Sigmoid colon (tissue), 7 donors: ENCODE measurements at regions of chr1 and their contacts with region 1.

Region 1: DNA sequence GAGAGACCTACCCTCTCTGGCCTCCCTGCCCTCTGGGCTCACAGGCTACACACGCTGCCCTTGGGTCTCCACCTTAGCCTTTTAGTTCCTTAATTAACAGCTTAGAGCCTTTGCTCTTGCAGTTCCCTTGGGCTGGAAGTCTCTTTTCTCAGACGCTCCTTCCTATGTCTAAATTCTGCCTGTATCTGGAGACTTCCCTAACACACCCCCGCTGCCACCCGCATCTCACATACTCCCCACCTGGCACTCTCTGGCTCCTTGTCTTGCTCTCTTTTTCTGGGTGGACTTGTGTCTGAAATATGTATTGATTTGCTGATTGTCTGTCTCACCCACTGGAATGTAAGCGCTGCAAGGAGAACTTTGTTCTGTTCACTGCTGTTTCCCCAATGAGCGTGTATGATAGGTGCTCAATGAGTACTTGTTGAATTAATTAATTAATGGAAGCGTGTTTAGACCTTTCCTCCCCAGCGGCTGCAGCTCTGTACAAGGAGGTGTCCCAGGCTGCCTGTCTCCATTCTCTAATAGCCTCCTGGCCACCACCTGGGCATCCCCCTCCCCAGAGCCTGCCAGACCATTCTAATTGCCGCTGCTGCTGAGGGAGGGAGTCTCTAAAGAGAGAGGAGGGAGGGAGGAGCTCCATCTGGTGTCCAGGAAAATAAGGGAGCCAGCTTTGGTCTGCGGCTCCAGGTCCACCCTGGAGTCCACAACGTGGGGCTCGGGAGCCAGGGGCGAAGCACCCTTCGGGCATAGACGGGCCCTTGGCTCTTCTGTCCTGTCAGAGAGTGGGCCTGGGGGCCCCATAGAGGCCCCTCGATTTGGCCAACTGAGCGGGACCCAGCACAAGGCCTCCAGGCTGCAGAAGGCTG is 95.4 kb downstream of the RNF220 start:
- DNase-seq: no peak
- H3K4me3 ChIP-seq: no peak overlapping the region
- H3K27ac ChIP-seq: no peak overlapping the region
- H3K4me1 ChIP-seq: peaks cover 0 to 13% (median 3%) of the 10 kb centered on the region in 4 donors
- H3K27me3 ChIP-seq: peaks cover 2 to 24% (median 4%) of the 10 kb centered on the region in 3 donors
- CTCF ChIP-seq: peak in 1 of 4 experiments; percentile 11
- EP300 ChIP-seq: no peak
- POLR2A ChIP-seq: no peak

Region 2: GRCh38 chr1:44377925-44378784 is 122.3 kb before region 1 on chr1:
- intact Hi-C with region 1: loop called (anchors 10 kb)
- DNase-seq: no peak
- H3K4me3 ChIP-seq: no peak overlapping the region
- H3K27ac ChIP-seq: no peak overlapping the region
- H3K4me1 ChIP-seq: no peaks in the 10 kb centered on the region
- H3K27me3 ChIP-seq: no peaks in the 10 kb centered on the region
- CTCF ChIP-seq: peak; percentile 12 to 58 (median 44)
- EP300 ChIP-seq: no peak
- POLR2A ChIP-seq: no peak